Naive thymus-derived CD4-positive, alpha-beta T cell (primary cell): ENCODE measurements at regions of chr3 and their contacts with region 1.

Region 1: DNA sequence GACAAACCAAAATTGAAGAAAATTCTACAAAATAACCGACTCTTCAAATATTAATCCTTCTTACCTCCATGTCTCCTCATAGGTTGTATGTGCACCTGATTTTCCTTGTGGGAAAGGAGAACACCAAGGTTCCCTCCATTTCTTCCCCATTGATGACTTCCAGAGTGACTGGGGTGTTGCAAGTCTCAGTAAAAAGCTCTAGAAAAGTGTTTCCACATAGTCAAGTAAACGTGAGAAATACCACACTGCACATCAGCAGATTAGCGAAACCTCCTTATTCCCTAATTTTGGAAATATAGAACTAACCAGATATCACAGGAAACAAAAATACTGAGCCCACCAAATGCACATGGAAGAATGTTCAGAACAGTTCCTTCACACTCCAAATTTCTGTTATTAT is 4.9 kb upstream of the RPN1 start:
- DNase-seq: no peak
- ATAC-seq: no peak
- H3K4me3 ChIP-seq: no peak overlapping the region
- H3K4me3 Mint-ChIP-seq: peak overlapping the region in 8 of 10 donors; percentile 30 to 94 (median 70)
- H3K27ac ChIP-seq: no peak overlapping the region
- H3K27ac Mint-ChIP-seq: peak overlapping the region in 4 of 9 donors; percentile 18 to 76 (median 50)
- H3K4me1 ChIP-seq: peaks cover 0 to 7% of the 10 kb centered on the region in 2 donors
- H3K4me1 Mint-ChIP-seq: peaks cover 6 to 13% (median 9%) of the 10 kb centered on the region in 7 donors
- H3K27me3 ChIP-seq: no peaks in the 10 kb centered on the region
- H3K27me3 Mint-ChIP-seq: peaks cover 0 to 4% (median 0%) of the 10 kb centered on the region in 5 donors

Region 2: DNA sequence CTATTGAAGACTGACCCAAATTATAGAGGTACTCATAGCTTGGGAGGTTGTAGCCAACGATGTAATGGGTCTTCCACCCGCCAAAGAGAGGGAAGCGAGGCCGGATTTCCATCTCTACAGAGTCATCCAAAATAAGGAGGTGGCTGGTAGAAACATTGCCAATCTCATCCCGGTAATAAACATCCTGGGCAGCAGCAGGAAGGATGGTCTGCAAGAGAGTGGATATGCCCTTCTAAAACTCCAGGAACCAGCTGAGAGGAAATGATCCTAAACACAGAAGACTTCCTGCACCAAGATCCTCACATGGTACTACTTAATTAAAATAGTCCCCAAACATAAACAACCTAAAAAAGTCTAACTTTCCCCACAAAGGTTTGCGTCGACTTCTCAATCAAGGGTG is 25.6 kb before region 1 on chr3:
- CTCF ChIA-PET with region 1: interaction called, 4 read pairs
- POLR2A ChIA-PET with region 1: interaction called, 8 read pairs
- intact Hi-C with region 1: loop called in 1 of 2 experiments (anchors 2 kb)
- DNase-seq: no peak
- ATAC-seq: no peak
- H3K4me3 ChIP-seq: no peak overlapping the region
- H3K4me3 Mint-ChIP-seq: no peak overlapping the region
- H3K27ac ChIP-seq: no peak overlapping the region
- H3K27ac Mint-ChIP-seq: peak overlapping the region in 2 of 9 donors; percentile 6 to 65
- H3K4me1 ChIP-seq: no peaks in the 10 kb centered on the region
- H3K4me1 Mint-ChIP-seq: peaks cover 0 to 15% (median 6%) of the 10 kb centered on the region in 7 donors
- H3K27me3 ChIP-seq: no peaks in the 10 kb centered on the region
- H3K27me3 Mint-ChIP-seq: no peaks in the 10 kb centered on the region